Activated naive CD4-positive, alpha-beta T cell treated with anti-CD3 and anti-CD28 coated beads for 36 hours (primary cell): ENCODE measurements at regions of chr13 and their contacts with region 1.

Region 1: GRCh38 chr13:49936085-49936940 is at the start of gene SPRYD7:
- DNase-seq: peak; percentile 96
- H3K4me3 Mint-ChIP-seq: peak within 1 kb of the TSS; percentile 90
- H3K27ac Mint-ChIP-seq: peak within 1 kb of the TSS; percentile 70
- H3K4me1 Mint-ChIP-seq: peaks cover 7% of the 10 kb centered on the region
- H3K27me3 Mint-ChIP-seq: peaks cover 2% of the 10 kb centered on the region
- total RNA-seq, gene SPRYD7: 2.5 to 2.6 TPM

Region 2: GRCh38 chr13:49206640-49207039 is 729.7 kb before region 1 on chr13:
- CTCF ChIA-PET with region 1: no interaction called
- intact Hi-C with region 1: no loop called
- DNase-seq: no peak
- H3K4me3 Mint-ChIP-seq: no peak overlapping the region
- H3K27ac Mint-ChIP-seq: no peak overlapping the region
- H3K4me1 Mint-ChIP-seq: no peaks in the 10 kb centered on the region
- H3K27me3 Mint-ChIP-seq: no peaks in the 10 kb centered on the region

Region 3: GRCh38 chr13:49585220-49586157 is 350.8 kb before region 1 on chr13 and contains the start of gene RCBTB1:
- CTCF ChIA-PET with region 1: no interaction called
- intact Hi-C with region 1: loop called (anchors 1 kb)
- DNase-seq: peak; percentile 56
- H3K4me3 Mint-ChIP-seq: peak within 1 kb of the TSS; percentile 88
- H3K27ac Mint-ChIP-seq: peak within 1 kb of the TSS; percentile 61
- H3K4me1 Mint-ChIP-seq: peaks cover 25% of the 10 kb centered on the region
- H3K27me3 Mint-ChIP-seq: no peaks in the 10 kb centered on the region
- total RNA-seq, gene RCBTB1: 17.8 to 19.2 TPM

Region 4: GRCh38 chr13:49669735-49670309 is 266.5 kb before region 1 on chr13:
- CTCF ChIA-PET with region 1: no interaction called
- intact Hi-C with region 1: loop called (anchors 5 kb)
- DNase-seq: peak; percentile 53
- H3K4me3 Mint-ChIP-seq: no peak overlapping the region
- H3K27ac Mint-ChIP-seq: no peak overlapping the region
- H3K4me1 Mint-ChIP-seq: no peaks in the 10 kb centered on the region
- H3K27me3 Mint-ChIP-seq: no peaks in the 10 kb centered on the region

Region 5: GRCh38 chr13:49690992-49691886 is 245.1 kb before region 1 on chr13 and contains the start of gene EBPL:
- CTCF ChIA-PET with region 1: interaction called, 4 read pairs
- intact Hi-C with region 1: loop called (anchors 1 kb)
- DNase-seq: peak; percentile 94
- H3K4me3 Mint-ChIP-seq: peak within 1 kb of the TSS; percentile 86
- H3K27ac Mint-ChIP-seq: peak within 1 kb of the TSS; percentile 80
- H3K4me1 Mint-ChIP-seq: peaks cover 35% of the 10 kb centered on the region
- H3K27me3 Mint-ChIP-seq: no peaks in the 10 kb centered on the region
- total RNA-seq, gene EBPL: 46.8 to 49.3 TPM

Region 6: GRCh38 chr13:49792550-49793324 is 143.6 kb before region 1 on chr13 and contains the start of gene KPNA3:
- CTCF ChIA-PET with region 1: interaction called, 6 read pairs
- intact Hi-C with region 1: loop called (anchors 1 kb)
- DNase-seq: peak; percentile 96
- H3K4me3 Mint-ChIP-seq: peak within 1 kb of the TSS; percentile 92
- H3K27ac Mint-ChIP-seq: peak within 1 kb of the TSS; percentile 94
- H3K4me1 Mint-ChIP-seq: peaks cover 29% of the 10 kb centered on the region
- H3K27me3 Mint-ChIP-seq: peaks cover 4% of the 10 kb centered on the region
- total RNA-seq, gene KPNA3: 47.9 to 50.7 TPM

Region 7: DNA sequence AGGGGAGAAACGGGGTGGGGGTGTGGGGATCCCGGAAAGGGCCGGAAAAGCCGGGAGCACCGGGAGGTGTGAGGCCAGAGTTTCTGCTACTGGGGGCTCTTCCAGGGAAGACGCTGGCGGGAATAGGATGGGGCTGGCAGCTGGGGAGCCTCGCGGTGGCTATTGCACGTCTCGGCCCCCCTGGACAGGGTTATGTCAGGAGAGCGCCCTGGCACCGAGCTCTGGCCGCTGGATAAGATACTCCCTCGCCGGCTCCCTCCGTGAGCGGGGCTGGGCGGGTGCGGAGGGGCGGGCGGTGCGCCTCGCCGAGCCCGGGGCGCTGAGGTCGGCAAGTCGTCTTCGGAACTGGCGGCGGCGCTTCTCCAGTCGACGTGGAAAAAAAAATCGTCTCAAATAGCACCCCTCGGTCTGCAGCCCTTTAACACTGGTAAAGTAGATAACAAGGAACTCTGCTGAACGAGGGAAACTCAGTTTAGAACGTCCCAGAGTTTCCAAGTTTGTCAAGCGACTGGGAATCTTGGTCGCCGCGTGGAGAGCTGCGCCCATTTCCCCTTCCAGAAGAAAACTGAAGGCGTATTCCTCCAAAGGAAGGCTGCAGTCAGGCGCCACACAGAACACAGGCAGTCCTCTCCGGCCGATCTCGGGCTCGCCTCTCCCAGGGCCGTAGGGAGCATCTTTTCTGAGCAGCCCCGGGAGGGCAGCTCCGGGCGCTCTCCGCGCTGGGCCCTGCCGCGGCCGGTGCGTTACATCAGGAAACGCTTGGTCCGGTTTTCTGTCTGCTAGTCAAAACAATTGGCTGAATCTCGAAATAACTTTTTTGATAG is 194.0 kb after region 1 on chr13:
- CTCF ChIA-PET with region 1: interaction called, 3 read pairs
- intact Hi-C with region 1: loop called (anchors 1 kb)
- DNase-seq: peak; percentile 24
- H3K4me3 Mint-ChIP-seq: peak overlapping the region; percentile 66
- H3K27ac Mint-ChIP-seq: peak overlapping the region; percentile 50
- H3K4me1 Mint-ChIP-seq: peaks cover 62% of the 10 kb centered on the region
- H3K27me3 Mint-ChIP-seq: peaks cover 60% of the 10 kb centered on the region

Region 8: DNA sequence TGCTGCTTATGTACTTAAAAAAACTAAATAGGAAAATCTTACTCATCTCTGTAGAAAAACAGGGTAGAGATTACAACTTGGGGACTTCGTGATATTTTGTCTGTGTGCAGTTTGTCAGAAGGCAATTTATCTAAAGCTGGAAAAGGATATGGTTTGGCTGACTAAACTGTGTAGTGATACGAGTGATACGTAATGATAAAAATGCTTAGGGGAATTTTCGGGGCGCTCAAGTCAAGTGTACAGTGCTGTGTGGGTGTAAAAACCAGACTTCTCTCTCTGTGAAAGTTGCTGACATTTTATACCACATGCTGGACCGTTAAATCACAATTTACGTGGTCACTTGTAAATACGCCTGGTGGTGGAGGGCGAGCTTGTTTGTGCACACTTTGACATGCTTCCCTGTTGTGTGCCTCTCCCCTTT is 300.6 kb after region 1 on chr13:
- CTCF ChIA-PET with region 1: no interaction called
- intact Hi-C with region 1: loop called (anchors 5 kb)
- DNase-seq: peak; percentile 62
- H3K4me3 Mint-ChIP-seq: no peak overlapping the region
- H3K27ac Mint-ChIP-seq: peak overlapping the region; percentile 61
- H3K4me1 Mint-ChIP-seq: peaks cover 48% of the 10 kb centered on the region
- H3K27me3 Mint-ChIP-seq: peaks cover 12% of the 10 kb centered on the region